ENCODE measurements at regions of chrX and their contacts with region 1.

Region 1: DNA sequence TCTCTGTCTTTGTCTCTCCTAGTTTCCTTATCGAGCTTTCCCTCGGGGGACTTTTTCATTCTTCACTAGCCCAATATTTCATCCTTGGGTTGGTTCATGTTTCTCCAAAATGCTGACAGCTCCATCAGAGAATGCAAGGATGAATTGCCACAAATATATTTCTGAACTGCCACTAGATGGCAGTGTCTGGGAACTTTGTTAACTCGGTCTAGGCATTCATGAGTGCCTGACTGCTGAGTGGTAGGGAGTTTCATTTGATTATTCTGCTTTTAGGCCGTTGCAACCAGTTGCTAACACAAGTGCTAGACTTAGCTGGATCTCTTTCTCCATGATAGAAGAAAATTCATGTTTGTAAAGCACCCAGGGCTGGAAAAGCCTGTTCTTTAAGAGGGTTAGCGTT is 73.5 kb upstream of the RAP2C start:
- DNase-seq: no peak

Region 2: DNA sequence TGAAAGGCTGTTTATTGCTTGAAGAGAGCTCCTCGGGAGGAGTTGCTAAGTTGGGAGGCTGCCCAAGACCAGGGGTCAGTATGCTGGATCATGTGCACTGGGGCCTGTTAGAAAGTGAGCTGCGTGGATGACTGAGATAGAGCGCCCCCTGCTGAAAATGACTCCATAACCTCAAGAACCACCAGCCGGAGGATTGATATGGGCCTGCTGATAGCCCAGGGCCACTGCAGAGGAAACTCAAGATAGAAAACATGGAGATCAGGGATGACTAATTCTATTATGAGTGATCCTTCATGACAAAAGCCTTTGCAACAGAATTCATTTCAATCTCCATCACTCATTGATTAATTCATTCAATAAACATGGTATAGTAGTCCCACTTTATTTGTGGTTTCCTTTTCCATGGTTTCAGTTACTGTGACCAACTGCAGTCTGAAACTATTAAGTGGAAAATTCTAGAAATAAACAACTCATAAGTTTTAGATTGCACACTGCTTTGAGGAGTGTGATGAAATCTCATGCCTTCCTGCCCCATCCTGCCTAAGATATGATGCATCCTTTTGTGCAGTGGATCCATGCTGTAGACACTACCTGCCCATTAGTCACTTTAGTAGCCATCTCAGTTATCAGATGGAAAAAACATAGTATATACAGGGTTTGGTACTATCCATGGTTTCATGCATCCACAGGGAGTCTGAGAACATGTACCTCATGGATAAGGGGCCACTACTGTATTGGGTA is 322.8 kb after region 1 on chrX:
- intact Hi-C with region 1: loop called (anchors 5 kb)
- DNase-seq: no peak

Measured in cardiac septum (tissue), 1 donor.